ENCODE measurements at regions of chr5 and their contacts with region 1.

Region 1: DNA sequence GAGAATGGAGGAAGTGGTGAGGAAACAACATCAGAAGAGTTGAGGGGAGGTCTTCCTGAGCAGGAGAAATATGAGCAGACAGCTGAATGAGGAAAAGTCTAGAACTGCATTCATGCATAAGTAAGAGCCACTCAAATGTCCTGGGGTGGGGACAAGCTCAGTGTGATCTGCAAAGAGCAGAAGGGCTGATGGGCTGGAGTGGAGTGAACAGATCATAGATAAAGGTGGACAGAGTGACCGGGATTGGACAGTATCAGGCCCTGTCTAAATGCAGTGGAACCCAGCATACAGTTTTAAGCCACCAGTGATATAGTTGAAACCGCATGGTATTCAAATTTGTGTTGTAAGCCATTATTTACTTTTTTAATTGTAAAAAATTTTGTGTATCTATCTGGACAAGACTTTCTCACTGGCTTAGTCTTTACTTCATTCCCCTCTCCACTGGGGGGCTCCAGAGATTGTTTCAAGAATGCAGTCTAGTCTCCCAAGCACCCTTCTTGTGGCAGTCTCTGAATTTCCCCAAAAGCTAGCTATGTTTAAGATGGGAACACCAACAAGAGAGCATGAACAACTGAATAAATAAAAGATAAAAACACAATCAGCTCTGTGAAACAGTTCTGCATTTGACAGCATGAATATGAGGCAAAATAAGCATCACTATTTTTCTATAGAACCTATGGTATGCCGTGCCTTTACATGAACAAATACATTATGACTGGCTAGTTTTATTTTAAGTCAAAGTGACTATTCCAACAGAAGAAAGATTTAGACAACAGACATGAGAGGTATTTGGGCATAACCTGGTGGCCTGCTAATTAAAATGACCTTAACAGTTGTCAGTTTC is 10.7 kb upstream of the STK32A start:
- DNase-seq: peak; percentile 42 to 55
- H3K4me3 ChIP-seq: no peak overlapping the region
- H3K27ac ChIP-seq: no peak overlapping the region
- H3K4me1 ChIP-seq: no peaks in the 10 kb centered on the region
- H3K27me3 ChIP-seq: no peaks in the 10 kb centered on the region
- CTCF ChIP-seq: peak; percentile 34 to 82 (median 68)
- POLR2A ChIP-seq: no peak

Region 2: DNA sequence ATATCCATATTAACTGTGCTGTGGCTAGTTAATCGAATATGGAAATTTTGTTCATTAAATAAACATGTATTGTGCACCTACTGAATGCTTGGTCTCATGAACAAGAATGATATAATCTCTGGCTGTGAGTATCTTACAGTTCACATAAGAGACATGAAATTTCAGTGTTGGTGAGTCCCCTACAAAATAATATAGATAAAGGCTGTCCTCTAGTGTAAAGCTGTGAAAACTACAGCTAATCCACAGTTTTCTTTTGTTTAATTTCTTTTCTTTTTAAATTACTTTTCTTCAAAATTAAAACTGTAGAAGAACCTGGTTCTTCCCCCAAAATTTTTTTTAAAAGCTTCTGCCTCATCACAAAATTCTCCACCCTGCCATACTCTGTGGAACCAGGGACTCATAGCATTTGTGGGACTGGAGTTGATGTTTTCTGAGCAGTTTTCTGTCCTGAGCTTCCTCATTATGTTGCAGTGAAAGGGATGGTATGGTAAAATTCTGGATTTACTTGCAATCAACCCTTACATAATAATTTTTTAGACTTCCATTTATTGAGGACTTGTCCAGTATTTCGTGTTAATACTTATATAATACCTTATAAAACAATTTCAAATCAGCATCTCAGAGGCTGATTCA is 145.7 kb after region 1 on chr5:
- intact Hi-C with region 1: loop called (anchors 5 kb)
- DNase-seq: no peak
- H3K4me3 ChIP-seq: no peak overlapping the region
- H3K27ac ChIP-seq: no peak overlapping the region
- H3K4me1 ChIP-seq: no peaks in the 10 kb centered on the region
- H3K27me3 ChIP-seq: no peaks in the 10 kb centered on the region
- CTCF ChIP-seq: peak; percentile 33 to 89 (median 69)
- POLR2A ChIP-seq: no peak

Region 3: DNA sequence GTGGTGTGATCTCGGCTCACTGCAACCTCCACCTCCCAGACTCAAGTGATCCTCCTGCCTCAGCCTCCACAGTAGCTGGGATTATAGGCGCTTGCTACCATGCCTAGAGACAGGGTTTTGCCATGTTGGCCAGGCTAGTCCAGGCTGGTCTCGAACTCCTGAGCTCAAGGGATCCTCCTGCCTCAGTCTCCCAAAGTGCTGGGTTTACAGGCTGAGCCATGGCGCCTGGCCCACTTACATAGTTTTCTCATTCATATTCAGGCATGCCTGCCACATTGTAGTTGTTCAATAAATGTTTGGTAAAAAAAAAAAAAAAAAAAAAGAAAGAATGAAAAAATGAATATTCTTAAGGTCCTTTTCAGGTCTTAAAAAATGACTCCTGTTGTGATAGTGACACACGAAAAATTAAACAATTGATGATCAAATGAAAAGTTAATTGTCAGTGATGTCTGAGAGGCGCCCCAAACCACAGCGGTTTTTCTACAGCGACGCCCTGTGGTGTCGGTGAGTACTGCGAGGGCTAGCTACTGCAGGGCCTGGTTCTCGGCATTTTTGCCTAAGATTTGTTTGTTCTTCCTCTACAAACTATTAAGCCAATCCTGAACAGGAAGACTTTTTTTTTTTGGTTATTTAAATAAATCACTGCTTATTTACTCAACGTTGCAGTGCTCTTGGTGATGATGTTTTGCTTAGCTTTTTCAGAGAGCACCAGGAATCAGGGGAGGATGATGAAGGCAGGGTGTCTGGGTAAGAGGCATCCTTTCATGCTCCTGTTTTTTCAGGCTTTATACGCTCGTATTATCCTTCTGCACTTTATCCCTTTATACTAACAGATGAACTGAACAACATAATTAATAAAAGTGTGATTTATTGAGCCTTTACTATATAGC is 352.7 kb after region 1 on chr5:
- intact Hi-C with region 1: loop called (anchors 10 kb)
- DNase-seq: peak; percentile 49 to 63
- H3K4me3 ChIP-seq: no peak overlapping the region
- H3K27ac ChIP-seq: no peak overlapping the region
- H3K4me1 ChIP-seq: no peaks in the 10 kb centered on the region
- H3K27me3 ChIP-seq: no peaks in the 10 kb centered on the region
- CTCF ChIP-seq: peak; percentile 55 to 86 (median 74)
- POLR2A ChIP-seq: no peak